Activated T-helper 1 cell treated with anti-CD3 and anti-CD28 coated beads, Interleukin-12 subunit alpha, Interleukin-12 subunit beta, Interleukin-2, Interleukin-4 antibody, amounts not matched to agents 30 ng/mL and 10 ng/mL and 1 ng/mL, durations not matched to agents 14 hours and 24 hours and 36 hours (primary cell): ENCODE measurements at regions of chrX and their contacts with region 1.

Region 1: DNA sequence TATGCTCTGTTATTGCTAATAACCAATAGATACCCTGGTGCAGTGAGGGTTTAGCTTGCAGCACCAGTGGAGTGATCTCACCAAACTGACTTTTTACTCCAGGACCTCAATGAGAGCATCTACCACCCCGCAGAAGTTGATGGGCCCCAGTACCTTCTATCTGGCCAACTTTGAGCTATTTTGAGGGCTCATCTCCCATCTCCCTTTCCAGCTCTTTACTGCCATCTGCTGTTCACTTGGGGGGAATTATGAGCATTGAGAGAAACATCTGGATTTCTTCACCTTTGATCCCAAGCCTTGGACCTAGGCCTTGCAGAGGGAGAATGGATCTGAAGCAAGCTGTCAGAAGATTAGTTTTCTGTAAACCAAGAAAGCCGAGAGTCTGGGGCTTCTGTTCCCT is 143.6 kb downstream of the TMEM164 start:
- DNase-seq: no peak
- H3K4me3 Mint-ChIP-seq: no peak overlapping the region
- H3K27ac Mint-ChIP-seq: no peak overlapping the region
- H3K4me1 Mint-ChIP-seq: no peaks in the 10 kb centered on the region
- H3K27me3 Mint-ChIP-seq: no peaks in the 10 kb centered on the region

Region 2: GRCh38 chrX:109911046-109911445 is 235.5 kb before region 1 on chrX:
- intact Hi-C with region 1: loop called (anchors 2 kb)
- DNase-seq: no peak
- H3K4me3 Mint-ChIP-seq: no peak overlapping the region
- H3K27ac Mint-ChIP-seq: no peak overlapping the region
- H3K4me1 Mint-ChIP-seq: no peaks in the 10 kb centered on the region
- H3K27me3 Mint-ChIP-seq: no peaks in the 10 kb centered on the region

Region 3: DNA sequence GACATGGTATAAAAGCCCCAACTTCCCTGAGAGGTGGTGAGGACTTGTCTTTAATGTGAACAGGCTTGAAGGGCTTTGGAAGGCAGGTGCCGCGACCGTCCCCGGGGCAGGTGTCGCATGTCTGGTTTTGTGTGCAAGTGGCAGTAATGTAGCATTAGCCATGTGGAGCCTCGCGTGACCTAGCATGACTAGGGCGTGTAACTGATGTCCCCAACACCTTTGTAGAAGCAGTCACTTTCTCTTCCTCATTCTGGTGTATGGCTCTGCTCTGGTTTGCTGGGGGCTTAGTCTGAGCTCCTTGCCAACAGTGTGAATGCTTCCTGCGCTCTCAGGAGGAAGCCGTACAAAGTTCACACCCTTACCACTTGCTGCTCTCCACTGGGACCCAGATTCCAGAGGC is 25.7 kb after region 1 on chrX:
- intact Hi-C with region 1: no loop called
- DNase-seq: no peak
- H3K4me3 Mint-ChIP-seq: no peak overlapping the region
- H3K27ac Mint-ChIP-seq: no peak overlapping the region
- H3K4me1 Mint-ChIP-seq: no peaks in the 10 kb centered on the region
- H3K27me3 Mint-ChIP-seq: no peaks in the 10 kb centered on the region